GM18951 (cell line): ENCODE measurements at regions of chr11 and their contacts with region 1.

Region 1: GRCh38 chr11:111422494-111423249 is 43.6 kb upstream of the POU2AF1 start:
- POLR2A ChIP-seq: no peak

Region 2: DNA sequence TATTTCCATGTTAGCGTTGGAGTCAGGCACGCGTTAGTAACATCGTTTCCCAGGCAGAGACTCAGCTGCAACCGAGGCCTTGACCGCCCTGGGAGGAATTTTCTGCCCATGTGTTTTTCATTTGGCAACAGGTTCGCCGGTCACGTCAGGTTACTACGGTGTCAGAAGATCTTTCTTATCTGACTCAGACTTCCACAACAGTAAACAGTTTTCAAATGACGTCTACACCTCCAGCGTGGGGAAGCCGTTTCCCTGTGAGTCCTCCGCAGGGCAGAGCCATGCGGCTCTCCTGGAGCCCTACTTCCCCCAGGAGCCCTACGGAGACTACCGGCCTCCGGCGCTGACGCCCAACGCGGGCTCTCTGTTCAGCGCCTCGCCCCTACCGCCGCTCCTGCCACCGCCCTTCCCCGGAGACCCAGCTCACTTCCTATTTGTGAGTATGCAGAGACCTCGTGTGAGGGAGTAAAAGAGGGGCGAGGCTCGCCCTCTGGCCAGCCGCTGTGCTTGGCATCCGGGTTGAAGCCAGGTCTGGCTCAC is 138.7 kb before region 1 on chr11:
- in situ Hi-C with region 1: loop called (anchors 5 kb)
- POLR2A ChIP-seq: no peak

Region 3: DNA sequence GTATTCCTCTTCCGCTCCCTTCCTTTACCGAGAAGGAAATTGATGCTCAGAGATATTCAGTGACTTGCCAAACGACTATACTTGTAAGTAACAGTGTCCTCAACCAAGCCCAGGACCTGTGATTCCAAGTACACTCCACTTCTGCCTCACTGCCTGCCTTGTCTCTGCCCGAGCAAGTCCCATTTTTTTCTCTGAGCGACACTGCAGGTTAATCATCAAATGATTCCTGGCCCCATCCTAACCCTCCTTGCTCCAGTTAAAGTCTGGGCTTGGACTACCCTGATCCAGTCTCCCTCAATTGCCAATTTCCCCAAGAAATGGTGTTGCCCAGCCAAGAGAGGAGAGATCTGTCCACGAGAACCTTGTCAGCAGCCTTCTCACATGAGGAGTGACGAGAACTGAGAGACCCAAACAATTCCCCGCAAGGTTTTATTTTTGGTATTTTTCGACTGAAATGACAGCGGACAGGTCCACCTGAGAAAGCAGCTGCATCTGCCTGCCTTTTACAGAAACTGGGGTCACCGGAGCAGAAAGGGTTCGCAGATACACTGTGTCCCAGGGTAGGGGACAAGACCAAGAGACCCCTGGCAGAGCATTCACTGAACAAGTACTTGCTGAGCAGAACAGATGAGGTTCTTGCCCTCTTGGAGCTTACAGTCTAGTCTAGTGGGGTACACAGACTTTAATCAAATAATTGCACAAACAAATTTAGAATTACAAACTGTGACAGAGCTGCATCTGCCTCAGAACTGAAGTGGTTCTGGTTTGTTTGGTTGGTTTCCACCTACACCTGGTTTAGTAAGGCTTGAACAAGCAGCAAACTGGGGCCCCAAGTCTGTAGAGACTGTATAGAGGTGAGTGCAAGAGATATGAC is 55.0 kb before region 1 on chr11:
- in situ Hi-C with region 1: loop called (anchors 5 kb)
- POLR2A ChIP-seq: no peak